ENCODE measurements at regions of chr2 and their contacts with region 1.

Region 1: DNA sequence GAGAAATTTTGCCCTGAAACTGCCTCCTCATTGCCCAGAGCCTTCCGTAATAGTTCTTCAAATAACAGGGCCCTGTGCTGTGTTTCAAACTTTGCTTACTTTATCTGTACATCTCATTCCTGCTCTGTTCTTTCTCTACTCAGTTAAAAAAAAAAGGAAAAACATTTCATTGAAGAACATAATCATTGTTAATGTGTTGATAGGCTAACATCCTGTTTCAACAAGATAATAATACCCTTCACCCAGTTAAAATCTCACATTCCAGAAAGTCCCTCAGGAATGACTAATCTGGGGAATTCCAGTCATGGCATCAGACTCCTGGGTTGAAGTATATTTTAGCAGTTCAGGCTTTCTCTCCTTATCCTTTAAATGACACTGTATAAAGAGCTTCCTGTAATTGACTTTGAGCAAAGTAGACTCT is 45.6 kb upstream of the ITGAV start:
- DNase-seq: peak; percentile 93
- ATAC-seq: peak; percentile 91
- H3K4me3 ChIP-seq: no peak overlapping the region; a peak in 1 of 6 replicates
- H3K27ac ChIP-seq: peak overlapping the region; percentile 53
- H3K4me1 ChIP-seq: peaks cover 54% of the 10 kb centered on the region
- H3K27me3 ChIP-seq: no peaks in the 10 kb centered on the region
- CTCF ChIP-seq: no peak
- EP300 ChIP-seq: peak in 1 of 2 experiments; percentile 83; a peak in 3 of 4 replicates
- POLR2A ChIP-seq: no peak
- RAD21 ChIP-seq: no peak

Region 2: DNA sequence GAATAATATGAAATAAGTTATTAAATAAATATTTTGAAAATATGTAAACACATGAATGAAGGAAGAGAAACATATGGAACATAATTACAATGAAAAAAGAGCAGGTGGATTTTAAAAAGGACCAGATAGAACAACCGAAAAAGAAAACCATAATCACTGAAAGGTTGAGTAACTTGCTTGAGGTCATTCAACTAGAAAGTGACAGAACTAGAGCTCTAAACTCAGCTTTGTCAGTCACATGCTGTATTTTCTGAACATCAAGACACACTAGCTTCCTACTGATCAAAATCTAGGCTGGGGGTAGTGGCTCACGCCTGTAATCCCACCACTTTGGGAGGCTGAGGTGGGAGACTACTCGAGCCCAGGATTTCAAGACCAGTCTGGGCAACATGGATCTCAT is 15.6 kb after region 1 on chr2:
- CTCF ChIA-PET with region 1: no interaction called
- POLR2A ChIA-PET with region 1: interaction called, 3 read pairs
- in situ Hi-C with region 1: no loop called
- intact Hi-C with region 1: loop called (anchors 1 kb)
- DNase-seq: no peak
- ATAC-seq: no peak
- H3K4me3 ChIP-seq: no peak overlapping the region
- H3K27ac ChIP-seq: no peak overlapping the region
- H3K4me1 ChIP-seq: peaks cover 20% of the 10 kb centered on the region
- H3K27me3 ChIP-seq: no peaks in the 10 kb centered on the region
- CTCF ChIP-seq: no peak
- EP300 ChIP-seq: no peak
- POLR2A ChIP-seq: no peak
- RAD21 ChIP-seq: no peak

Region 3: DNA sequence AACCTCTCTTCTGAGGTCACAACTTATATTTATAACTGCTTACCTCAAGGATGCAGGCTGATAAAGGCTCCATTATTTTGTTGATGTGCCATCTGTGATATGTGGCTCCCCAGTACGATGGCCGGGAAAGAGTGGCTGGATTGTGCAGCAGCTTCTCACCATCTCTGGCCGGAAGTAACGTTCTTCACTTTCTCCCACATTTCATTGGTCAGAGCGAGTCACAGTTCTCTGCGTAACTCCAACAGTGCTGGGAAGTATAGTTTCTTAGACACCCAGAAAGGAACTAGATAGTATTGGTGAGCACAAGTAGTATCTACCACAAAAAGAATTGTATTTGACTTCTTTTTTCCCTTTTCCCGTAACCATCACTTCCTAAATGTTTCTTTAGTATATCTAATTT is 276.0 kb after region 1 on chr2:
- CTCF ChIA-PET with region 1: no interaction called
- POLR2A ChIA-PET with region 1: no interaction called
- in situ Hi-C with region 1: no loop called
- intact Hi-C with region 1: no loop called
- DNase-seq: no peak
- ATAC-seq: no peak
- H3K4me3 ChIP-seq: no peak overlapping the region
- H3K27ac ChIP-seq: no peak overlapping the region
- H3K4me1 ChIP-seq: no peaks in the 10 kb centered on the region
- H3K27me3 ChIP-seq: no peaks in the 10 kb centered on the region
- CTCF ChIP-seq: no peak
- EP300 ChIP-seq: no peak
- POLR2A ChIP-seq: no peak
- RAD21 ChIP-seq: no peak